Stomach (tissue), 19 donors: ENCODE measurements at regions of chr16 and their contacts with region 1.

Region 1: GRCh38 chr16:69747115-69747514 is 7.6 kb downstream of the NOB1 start:
- DNase-seq: no peak
- H3K4me3 ChIP-seq: no peak overlapping the region
- H3K27ac ChIP-seq: no peak overlapping the region
- H3K4me1 ChIP-seq: peaks cover 0 to 21% (median 7%) of the 10 kb centered on the region in 4 donors
- H3K27me3 ChIP-seq: no peaks in the 10 kb centered on the region
- CTCF ChIP-seq: no peak
- EP300 ChIP-seq: no peak
- POLR2A ChIP-seq: no peak

Region 2: DNA sequence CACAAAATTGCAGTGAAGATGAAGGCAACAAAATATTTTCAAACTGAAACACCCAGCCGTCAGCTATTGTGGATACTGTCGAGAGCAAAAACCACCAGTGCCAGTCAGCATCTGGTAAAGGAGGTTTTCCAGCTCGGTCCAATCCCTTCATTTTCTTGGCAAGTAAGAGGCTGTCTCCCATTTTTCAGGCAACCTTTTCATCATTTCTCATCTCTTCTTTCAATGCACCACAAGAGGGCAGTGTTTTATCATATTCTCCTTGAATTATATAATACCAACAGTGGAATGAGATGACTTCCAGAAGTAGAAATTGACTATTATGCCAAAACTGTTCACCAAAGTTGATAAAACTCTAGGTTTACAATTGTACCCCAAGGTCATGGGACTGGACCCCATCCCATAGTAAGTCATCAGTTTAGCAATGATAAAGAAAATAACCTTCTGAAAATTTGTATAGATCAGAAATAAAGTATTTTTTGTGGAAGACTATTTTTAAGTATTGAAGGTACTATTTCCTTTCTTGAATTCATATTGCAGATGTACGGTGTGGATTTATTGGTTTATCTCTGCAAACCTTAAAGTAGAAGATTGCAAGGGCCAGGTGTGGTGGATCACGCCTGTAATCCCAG is 37.5 kb before region 1 on chr16:
- intact Hi-C with region 1: loop called (anchors 5 kb)
- DNase-seq: peak in 1 of 2 donors; percentile 86
- H3K4me3 ChIP-seq: no peak overlapping the region
- H3K27ac ChIP-seq: peak overlapping the region in 2 of 5 donors; percentile 16 to 48
- H3K4me1 ChIP-seq: peaks cover 0 to 49% (median 28%) of the 10 kb centered on the region in 4 donors
- H3K27me3 ChIP-seq: no peaks in the 10 kb centered on the region
- CTCF ChIP-seq: peak in 5 of 7 experiments; percentile 42 to 80 (median 68)
- EP300 ChIP-seq: no peak
- POLR2A ChIP-seq: no peak

Region 3: GRCh38 chr16:69804297-69804696 is 57.2 kb after region 1 on chr16:
- intact Hi-C with region 1: no loop called
- DNase-seq: no peak
- H3K4me3 ChIP-seq: no peak overlapping the region
- H3K27ac ChIP-seq: no peak overlapping the region
- H3K4me1 ChIP-seq: no peaks in the 10 kb centered on the region
- H3K27me3 ChIP-seq: no peaks in the 10 kb centered on the region
- CTCF ChIP-seq: no peak
- EP300 ChIP-seq: no peak
- POLR2A ChIP-seq: no peak

Region 4: GRCh38 chr16:69917739-69918138 is 170.6 kb after region 1 on chr16:
- intact Hi-C with region 1: no loop called
- DNase-seq: peak in 1 of 2 donors; percentile 87
- H3K4me3 ChIP-seq: no peak overlapping the region
- H3K27ac ChIP-seq: peak overlapping the region in 3 of 5 donors; percentile 10 to 43 (median 24)
- H3K4me1 ChIP-seq: peaks cover 0 to 9% (median 4%) of the 10 kb centered on the region in 4 donors
- H3K27me3 ChIP-seq: no peaks in the 10 kb centered on the region
- CTCF ChIP-seq: no peak
- EP300 ChIP-seq: no peak
- POLR2A ChIP-seq: no peak